ENCODE measurements at regions of chr7 and their contacts with region 1.

Region 1: DNA sequence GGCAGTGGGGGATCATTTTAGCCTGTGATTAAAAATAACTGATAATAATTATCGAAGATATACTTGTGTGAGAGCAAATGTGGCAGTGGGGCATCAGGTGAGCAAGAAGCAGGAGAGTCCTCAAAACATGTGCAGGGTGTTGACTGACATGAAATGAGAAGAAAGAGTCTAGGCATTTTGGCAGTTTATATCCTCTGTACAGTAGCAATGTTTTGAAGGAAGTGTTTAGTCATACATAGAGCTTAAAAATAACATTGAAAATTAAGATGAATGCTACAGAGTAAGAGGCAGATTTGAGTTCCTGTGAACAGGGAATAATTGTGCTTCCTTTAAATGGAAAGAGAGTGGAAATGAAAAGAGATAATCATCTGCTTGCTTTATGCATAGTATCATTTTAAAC is 47.4 kb downstream of the VPS50 start:
- DNase-seq: no peak
- H3K4me3 ChIP-seq: no peak overlapping the region
- H3K27me3 ChIP-seq: no peaks in the 10 kb centered on the region
- CTCF ChIP-seq: no peak

Region 2: GRCh38 chr7:92904292-92905131 is 375.0 kb before region 1 on chr7:
- CTCF ChIA-PET with region 1: no interaction called
- POLR2A ChIA-PET with region 1: no interaction called
- DNase-seq: peak; percentile 75
- H3K4me3 ChIP-seq: no peak overlapping the region
- H3K27me3 ChIP-seq: no peaks in the 10 kb centered on the region
- CTCF ChIP-seq: no peak

Region 3: DNA sequence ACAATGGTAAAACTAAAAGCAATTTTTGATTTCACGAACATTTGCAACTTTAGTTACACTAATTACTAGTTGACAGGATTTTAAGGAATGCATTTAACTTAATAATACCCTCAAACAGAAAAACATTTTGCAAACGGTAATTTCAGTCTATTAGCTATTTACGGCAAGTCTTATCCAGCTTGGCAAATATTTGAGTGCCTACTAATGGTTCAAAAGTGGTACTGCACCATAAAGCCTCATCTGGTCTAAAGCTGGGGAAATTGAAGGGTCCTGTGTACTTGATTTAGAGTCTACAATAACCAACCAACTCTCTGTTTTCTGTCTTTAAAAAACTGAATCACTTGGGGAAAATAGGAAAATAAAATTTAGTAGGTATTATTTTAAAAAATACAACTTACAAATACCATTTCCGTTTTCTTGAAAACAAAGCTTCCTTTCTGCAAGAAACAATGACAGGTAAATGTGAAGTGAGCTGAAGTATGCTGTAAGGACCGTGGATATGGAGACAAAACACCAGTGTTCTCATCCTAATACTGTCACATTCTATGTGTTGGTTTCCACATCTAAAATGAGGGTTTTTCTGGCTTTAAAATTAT is 94.9 kb after region 1 on chr7:
- CTCF ChIA-PET with region 1: interaction called, 11 read pairs
- POLR2A ChIA-PET with region 1: no interaction called
- DNase-seq: peak; percentile 6
- H3K4me3 ChIP-seq: no peak overlapping the region
- H3K27me3 ChIP-seq: peaks cover 4% of the 10 kb centered on the region
- CTCF ChIP-seq: peak; percentile 93

Region 4: DNA sequence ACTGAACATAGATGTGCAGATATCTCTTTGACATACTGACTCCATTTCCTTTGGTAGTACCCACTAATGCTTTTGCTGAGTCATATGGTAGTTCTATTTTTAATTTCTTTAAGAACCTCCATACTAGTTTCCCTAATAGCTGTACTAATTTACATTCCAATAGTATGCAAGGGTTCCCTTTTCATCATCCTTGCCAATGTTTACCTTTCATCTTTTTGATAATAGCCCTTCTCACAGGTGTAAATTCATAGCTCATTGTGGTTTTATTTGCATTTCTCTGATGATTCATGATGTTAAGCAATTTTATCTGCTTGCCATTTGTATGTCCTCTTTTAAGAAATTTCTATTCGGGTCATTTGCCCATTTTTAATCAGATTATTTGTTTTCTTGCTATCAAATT is 135.1 kb after region 1 on chr7:
- CTCF ChIA-PET with region 1: no interaction called
- POLR2A ChIA-PET with region 1: no interaction called
- DNase-seq: no peak
- H3K4me3 ChIP-seq: no peak overlapping the region
- H3K27me3 ChIP-seq: no peaks in the 10 kb centered on the region
- CTCF ChIP-seq: no peak

Measured in BJ (cell line).